Left ventricle myocardium inferior (tissue), 1 donor: ENCODE measurements at regions of chr14 and their contacts with region 1.

Region 1: DNA sequence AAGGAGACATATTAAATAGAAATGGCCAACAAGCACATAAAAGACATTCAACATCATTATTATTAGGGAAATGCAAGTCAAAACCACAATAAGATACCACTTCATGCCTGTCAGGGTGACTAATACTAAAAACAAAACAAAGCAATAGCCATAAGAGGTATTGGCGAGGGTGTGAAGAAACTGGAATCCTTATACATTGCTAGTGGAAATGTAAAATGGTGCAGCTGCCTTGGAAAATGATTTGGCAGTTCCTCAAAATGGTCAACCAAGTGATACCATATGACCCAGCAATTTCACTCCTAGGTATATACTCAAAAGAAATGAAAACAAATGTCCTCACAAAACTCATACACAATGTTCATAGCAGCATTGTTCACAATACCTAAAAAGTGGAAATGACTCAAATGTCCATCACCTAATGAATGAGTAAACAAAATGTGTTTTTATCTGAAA is 27.0 kb downstream of the GPR135 start:
- DNase-seq: no peak
- H3K4me3 ChIP-seq: no peak overlapping the region
- H3K27ac ChIP-seq: peak overlapping the region; percentile 62
- H3K4me1 ChIP-seq: peaks cover 25% of the 10 kb centered on the region
- H3K27me3 ChIP-seq: no peaks in the 10 kb centered on the region
- CTCF ChIP-seq: no peak

Region 2: GRCh38 chr14:59333668-59334067 is 104.6 kb before region 1 on chr14:
- intact Hi-C with region 1: loop called (anchors 10 kb)
- DNase-seq: no peak
- H3K4me3 ChIP-seq: peak overlapping the region; percentile 38
- H3K27ac ChIP-seq: peak overlapping the region; percentile 92
- H3K4me1 ChIP-seq: peaks cover 89% of the 10 kb centered on the region
- H3K27me3 ChIP-seq: no peaks in the 10 kb centered on the region
- CTCF ChIP-seq: no peak

Region 3: DNA sequence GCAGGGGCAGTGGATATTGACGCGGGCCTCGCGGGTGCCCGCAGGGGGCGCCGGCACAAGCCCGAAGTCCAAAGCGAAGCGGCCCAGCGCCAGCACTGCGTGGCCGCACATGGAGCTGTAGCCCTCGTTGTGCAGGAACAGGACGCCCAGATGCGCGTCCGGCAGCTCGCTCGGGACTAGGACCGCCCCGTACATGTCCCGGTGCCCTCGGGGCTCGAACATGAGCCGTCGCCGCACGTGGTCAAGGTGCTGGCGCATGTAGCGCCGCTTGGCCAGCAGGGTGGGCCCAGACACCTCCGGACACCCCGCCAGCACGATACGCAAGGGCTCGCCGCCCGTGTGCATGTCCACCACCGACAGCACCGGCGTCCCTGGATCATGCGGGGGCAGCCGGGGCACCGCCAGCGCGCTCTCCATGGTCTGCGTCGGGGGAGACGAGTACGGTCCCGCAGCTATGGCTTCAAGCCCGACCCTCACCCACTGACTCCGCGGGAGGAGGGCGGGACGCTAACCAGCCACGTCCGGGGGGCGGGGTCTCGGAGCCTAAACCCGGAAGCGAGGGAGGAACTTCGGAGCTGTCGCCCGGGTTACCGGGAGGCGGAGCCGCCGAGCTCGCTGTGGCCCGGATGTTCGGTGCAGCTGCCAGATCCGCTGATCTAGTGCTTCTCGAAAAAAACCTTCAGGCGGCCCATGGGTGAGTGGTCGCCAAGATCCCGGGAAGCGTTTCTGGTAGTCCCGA is 45.8 kb after region 1 on chr14 and contains the starts of genes JKAMP and L3HYPDH:
- intact Hi-C with region 1: no loop called
- DNase-seq: peak; percentile 98
- H3K4me3 ChIP-seq: peak within 1 kb of the TSS; percentile 79
- H3K27ac ChIP-seq: peak within 1 kb of the TSS; percentile 93
- H3K4me1 ChIP-seq: peaks cover 81% of the 10 kb centered on the region
- H3K27me3 ChIP-seq: no peaks in the 10 kb centered on the region
- CTCF ChIP-seq: peak; percentile 80
- total RNA-seq, gene JKAMP: 23.5 TPM
- total RNA-seq, gene L3HYPDH: 9.1 TPM

Region 4: GRCh38 chr14:59520224-59520623 is 82.0 kb after region 1 on chr14:
- intact Hi-C with region 1: no loop called
- DNase-seq: no peak
- H3K4me3 ChIP-seq: no peak overlapping the region
- H3K27ac ChIP-seq: no peak overlapping the region
- H3K4me1 ChIP-seq: no peaks in the 10 kb centered on the region
- H3K27me3 ChIP-seq: peaks cover 8% of the 10 kb centered on the region
- CTCF ChIP-seq: no peak